Motor neuron (in vitro differentiated cells): ENCODE measurements at regions of chr21 and their contacts with region 1.

Region 1: GRCh38 chr21:32096411-32096810 is 182.4 kb downstream of the MIS18A start:
- ATAC-seq: peak in 3 of 8 experiments; percentile 26 to 52 (median 40)
- H3K4me3 ChIP-seq: no peak overlapping the region
- H3K27ac ChIP-seq: no peak overlapping the region
- H3K4me1 ChIP-seq: no peaks in the 10 kb centered on the region

Region 2: GRCh38 chr21:31991356-31992331 is 104.8 kb before region 1 on chr21:
- in situ Hi-C with region 1: loop called in 1 of 9 experiments (anchors 25 kb)
- ATAC-seq: no peak
- H3K4me3 ChIP-seq: no peak overlapping the region
- H3K27ac ChIP-seq: no peak overlapping the region
- H3K4me1 ChIP-seq: no peaks in the 10 kb centered on the region

Region 3: DNA sequence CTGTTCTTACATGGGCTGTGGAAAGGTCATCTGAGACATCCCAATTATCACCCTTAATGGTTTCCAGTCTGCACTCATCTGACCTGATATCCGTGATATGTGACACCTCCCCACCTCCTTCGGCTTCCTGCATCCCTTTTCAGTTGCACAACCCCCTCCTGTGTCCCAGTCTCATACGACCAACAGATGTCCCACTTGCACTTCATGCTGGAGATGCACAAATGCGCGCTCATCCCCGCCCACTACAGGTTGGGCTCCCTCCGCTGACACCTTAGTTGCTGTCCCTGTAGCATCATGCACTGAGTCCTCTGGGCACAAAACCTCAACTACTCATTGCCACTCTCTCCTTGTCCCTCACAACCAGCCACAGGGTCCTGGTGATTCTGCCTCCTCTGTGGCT is 88.1 kb after region 1 on chr21:
- in situ Hi-C with region 1: loop called in 1 of 9 experiments (anchors 25 kb)
- ATAC-seq: peak in 1 of 8 experiments; percentile 83
- H3K4me3 ChIP-seq: no peak overlapping the region
- H3K27ac ChIP-seq: no peak overlapping the region
- H3K4me1 ChIP-seq: peaks cover 15 to 20% of the 10 kb centered on the region in 2 donors

Region 4: GRCh38 chr21:32587120-32587519 is 490.7 kb after region 1 on chr21:
- in situ Hi-C with region 1: no loop called
- ATAC-seq: no peak
- H3K4me3 ChIP-seq: no peak overlapping the region
- H3K27ac ChIP-seq: no peak overlapping the region
- H3K4me1 ChIP-seq: no peaks in the 10 kb centered on the region